ENCODE measurements at regions of chr1 and their contacts with region 1.

Region 1: DNA sequence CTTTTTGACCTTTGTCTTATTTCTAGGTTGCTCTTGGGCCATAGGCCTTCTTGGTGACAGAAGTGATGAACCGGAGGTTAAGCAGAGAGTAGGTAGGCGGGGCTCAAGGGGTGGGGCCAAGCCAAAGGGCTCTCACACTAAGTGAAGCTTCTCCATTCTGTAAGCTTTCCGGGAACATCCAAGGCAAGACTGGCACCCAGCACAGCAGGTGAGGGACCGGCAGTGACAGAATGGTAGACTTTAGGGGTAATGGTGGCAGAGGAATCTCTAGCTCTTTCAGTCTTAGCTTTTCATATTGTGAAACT is at the start of gene TNFAIP8L2:
- DNase-seq: peak; percentile 89
- ATAC-seq: peak; percentile 89
- H3K4me3 Mint-ChIP-seq: peak within 1 kb of the TSS; percentile 100
- H3K27ac Mint-ChIP-seq: peak within 1 kb of the TSS; percentile 98
- H3K4me1 Mint-ChIP-seq: peaks cover 55% of the 10 kb centered on the region
- H3K27me3 Mint-ChIP-seq: no peaks in the 10 kb centered on the region
- total RNA-seq, gene TNFAIP8L2: 18.5 to 20.0 TPM

Region 2: DNA sequence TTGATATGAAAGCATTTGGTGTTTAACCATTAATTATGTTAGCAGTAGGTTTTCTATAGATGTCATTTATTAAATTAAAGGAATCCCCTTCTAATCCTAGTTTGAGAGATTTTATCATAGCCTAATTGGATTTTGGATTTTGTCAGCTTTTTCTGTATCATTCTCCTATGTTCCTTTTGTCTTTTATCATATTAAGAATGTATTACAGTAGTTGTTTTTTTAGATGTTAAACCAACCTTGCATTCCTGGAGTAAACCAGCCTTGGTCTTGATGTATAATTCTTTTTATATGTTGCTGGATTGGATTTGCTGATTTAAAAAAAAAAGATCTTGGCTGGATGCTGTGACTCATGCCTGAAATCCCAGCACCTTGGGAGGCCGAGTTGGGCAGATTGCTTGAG is 224.7 kb before region 1 on chr1:
- CTCF ChIA-PET with region 1: no interaction called
- POLR2A ChIA-PET with region 1: no interaction called
- DNase-seq: no peak
- ATAC-seq: no peak
- H3K4me3 Mint-ChIP-seq: no peak overlapping the region
- H3K27ac Mint-ChIP-seq: no peak overlapping the region
- H3K4me1 Mint-ChIP-seq: peaks cover 14% of the 10 kb centered on the region
- H3K27me3 Mint-ChIP-seq: no peaks in the 10 kb centered on the region

Region 3: GRCh38 chr1:150944856-150945255 is 211.6 kb before region 1 on chr1:
- CTCF ChIA-PET with region 1: no interaction called
- POLR2A ChIA-PET with region 1: no interaction called
- DNase-seq: no peak
- ATAC-seq: no peak
- H3K4me3 Mint-ChIP-seq: no peak overlapping the region
- H3K27ac Mint-ChIP-seq: no peak overlapping the region
- H3K4me1 Mint-ChIP-seq: no peaks in the 10 kb centered on the region
- H3K27me3 Mint-ChIP-seq: no peaks in the 10 kb centered on the region

Region 4: GRCh38 chr1:151024540-151025146 is 131.8 kb before region 1 on chr1:
- CTCF ChIA-PET with region 1: interaction called, 52 read pairs
- POLR2A ChIA-PET with region 1: interaction called, 3 read pairs
- DNase-seq: peak; percentile 92
- ATAC-seq: peak; percentile 100
- H3K4me3 Mint-ChIP-seq: peak overlapping the region; percentile 45
- H3K27ac Mint-ChIP-seq: peak overlapping the region; percentile 74
- H3K4me1 Mint-ChIP-seq: peaks cover 7% of the 10 kb centered on the region
- H3K27me3 Mint-ChIP-seq: no peaks in the 10 kb centered on the region

Region 5: GRCh38 chr1:151059078-151059907 is 97.2 kb before region 1 on chr1 and contains the start of gene CDC42SE1:
- CTCF ChIA-PET with region 1: interaction called, 9 read pairs
- POLR2A ChIA-PET with region 1: interaction called, 11 read pairs
- DNase-seq: peak; percentile 91
- ATAC-seq: peak; percentile 78
- H3K4me3 Mint-ChIP-seq: peak within 1 kb of the TSS; percentile 94
- H3K27ac Mint-ChIP-seq: peak within 1 kb of the TSS; percentile 96
- H3K4me1 Mint-ChIP-seq: peaks cover 56% of the 10 kb centered on the region
- H3K27me3 Mint-ChIP-seq: no peaks in the 10 kb centered on the region
- total RNA-seq, gene CDC42SE1: 238 to 245 TPM

Region 6: DNA sequence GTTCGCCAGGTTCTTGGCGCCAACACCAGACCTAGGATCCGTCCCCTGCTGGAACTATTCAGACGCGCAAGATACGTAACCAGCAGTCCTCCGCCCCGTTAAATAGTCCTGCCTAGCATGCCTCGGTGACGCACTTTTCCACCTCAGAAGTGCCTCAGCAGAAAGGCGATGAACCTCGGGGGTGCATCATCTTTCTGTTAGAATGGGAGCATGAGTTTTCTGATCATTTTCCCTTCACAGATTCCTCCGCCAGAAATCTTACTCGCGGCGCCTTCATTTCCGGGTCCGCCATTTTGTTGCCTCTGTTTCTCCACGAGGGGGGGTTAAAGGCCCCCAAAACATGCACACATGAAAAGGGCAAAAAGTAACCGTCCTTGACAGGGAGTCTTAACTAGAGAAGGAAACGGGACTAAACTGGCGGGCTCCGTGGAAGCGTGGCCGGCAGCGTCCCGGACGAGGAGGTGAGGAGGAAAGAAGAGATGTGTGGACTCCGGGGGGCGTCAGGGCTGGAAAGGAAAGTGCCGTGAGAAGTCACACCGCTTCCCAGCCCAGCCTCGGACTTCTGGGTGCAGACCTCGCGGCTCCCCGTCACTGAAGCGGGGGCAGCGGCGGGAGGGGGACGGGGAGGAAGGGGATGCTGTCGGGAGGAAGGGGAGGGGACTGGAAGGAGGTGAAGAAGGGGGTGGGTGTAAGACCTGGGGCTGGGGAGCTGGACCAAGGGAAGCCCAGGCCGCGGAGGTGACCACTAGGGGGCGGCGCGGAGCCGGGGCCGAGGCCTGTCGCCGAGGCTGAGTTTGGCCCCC is 85.8 kb before region 1 on chr1 and contains the start of gene GABPB2:
- CTCF ChIA-PET with region 1: interaction called, 20 read pairs
- POLR2A ChIA-PET with region 1: interaction called, 6 read pairs
- DNase-seq: peak; percentile 88
- ATAC-seq: peak; percentile 87
- H3K4me3 Mint-ChIP-seq: peak within 1 kb of the TSS; percentile 98
- H3K27ac Mint-ChIP-seq: peak within 1 kb of the TSS; percentile 100
- H3K4me1 Mint-ChIP-seq: peaks cover 15% of the 10 kb centered on the region
- H3K27me3 Mint-ChIP-seq: no peaks in the 10 kb centered on the region
- total RNA-seq, gene GABPB2: 32.7 to 34.4 TPM

Region 7: DNA sequence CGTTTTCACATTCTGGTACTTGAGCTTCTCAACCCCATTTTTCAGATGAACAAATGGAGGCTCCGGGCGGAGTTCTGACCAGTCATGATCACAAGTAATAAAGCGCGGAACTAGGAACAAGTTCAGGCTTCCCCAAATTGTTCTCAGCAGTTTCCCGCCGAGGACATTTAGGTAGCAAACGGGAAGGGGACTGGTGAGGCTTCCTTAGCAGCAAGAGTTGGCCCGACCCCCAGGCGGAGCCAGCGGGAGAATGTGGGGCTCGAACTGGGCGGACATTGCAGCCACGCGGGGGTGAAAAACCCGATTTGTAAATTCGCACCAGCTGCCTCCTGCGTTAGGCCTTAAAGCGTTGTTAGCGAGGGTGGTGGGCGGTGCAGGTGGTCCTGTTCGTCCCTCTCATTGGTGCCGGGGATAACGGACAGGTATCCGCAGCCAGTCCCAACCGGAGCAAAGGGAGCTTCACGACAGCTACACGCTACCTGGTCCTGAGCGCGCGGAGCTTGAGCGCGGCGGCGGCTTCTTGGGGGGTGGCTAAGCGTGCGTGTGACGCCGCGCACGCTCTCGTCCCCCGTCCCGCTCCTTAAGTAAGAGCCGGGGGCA is 25.4 kb before region 1 on chr1:
- CTCF ChIA-PET with region 1: interaction called, 18 read pairs
- POLR2A ChIA-PET with region 1: interaction called, 12 read pairs
- DNase-seq: peak; percentile 88
- ATAC-seq: peak; percentile 100
- H3K4me3 Mint-ChIP-seq: peak overlapping the region; percentile 69
- H3K27ac Mint-ChIP-seq: peak overlapping the region; percentile 68
- H3K4me1 Mint-ChIP-seq: peaks cover 25% of the 10 kb centered on the region
- H3K27me3 Mint-ChIP-seq: peaks cover 3% of the 10 kb centered on the region

Region 8: GRCh38 chr1:151189638-151190445 is 33.4 kb after region 1 on chr1 and contains the start of gene VPS72:
- CTCF ChIA-PET with region 1: interaction called, 7 read pairs
- POLR2A ChIA-PET with region 1: interaction called, 11 read pairs
- DNase-seq: peak; percentile 92
- ATAC-seq: peak; percentile 96
- H3K4me3 Mint-ChIP-seq: peak within 1 kb of the TSS; percentile 100
- H3K27ac Mint-ChIP-seq: peak within 1 kb of the TSS; percentile 99
- H3K4me1 Mint-ChIP-seq: peaks cover 28% of the 10 kb centered on the region
- H3K27me3 Mint-ChIP-seq: peaks cover 3% of the 10 kb centered on the region
- total RNA-seq, gene VPS72: 59.8 to 61.7 TPM

Region 9: DNA sequence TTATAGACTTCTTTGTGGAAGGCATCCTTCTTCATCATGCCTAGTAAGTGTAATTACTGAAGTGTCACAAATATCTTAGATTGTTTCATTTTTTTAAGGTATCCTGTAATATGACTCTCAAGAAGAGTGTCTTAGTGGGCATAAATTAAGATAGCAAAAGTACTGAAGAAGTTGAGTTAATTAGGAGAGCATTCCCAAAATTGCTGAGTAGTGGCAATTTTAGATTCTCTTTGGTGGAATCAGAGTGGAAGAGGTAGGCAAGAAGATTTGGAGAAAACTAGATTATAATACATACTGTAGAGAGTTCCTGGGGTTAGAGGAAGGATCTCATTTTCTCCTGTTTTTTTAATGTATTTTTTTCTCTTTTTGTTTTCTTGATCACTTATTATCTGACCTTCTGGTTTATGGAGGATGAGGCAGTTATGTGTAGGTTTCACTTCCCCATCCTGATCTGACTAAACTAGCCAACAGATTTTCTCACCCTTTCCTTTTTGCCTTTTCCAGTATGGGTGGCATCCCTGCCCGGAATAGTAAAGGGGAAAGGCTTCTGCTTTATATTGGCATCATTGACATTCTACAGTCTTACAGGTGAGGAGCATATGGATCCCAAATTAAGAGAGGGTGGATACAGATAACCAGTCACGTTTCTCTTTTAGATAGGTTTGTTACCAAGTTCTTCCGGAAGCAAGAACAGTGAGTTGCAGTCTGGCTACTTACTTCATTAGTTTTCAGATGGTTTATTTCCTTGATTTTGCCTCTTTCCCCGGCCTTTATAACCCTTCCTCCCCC is 81.4 kb after region 1 on chr1:
- CTCF ChIA-PET with region 1: no interaction called
- POLR2A ChIA-PET with region 1: no interaction called
- DNase-seq: no peak
- ATAC-seq: no peak
- H3K4me3 Mint-ChIP-seq: no peak overlapping the region
- H3K27ac Mint-ChIP-seq: peak overlapping the region; percentile 13
- H3K4me1 Mint-ChIP-seq: no peaks in the 10 kb centered on the region
- H3K27me3 Mint-ChIP-seq: no peaks in the 10 kb centered on the region

Region 10: GRCh38 chr1:151254217-151255213 is 98.0 kb after region 1 on chr1 and contains the start of gene PSMD4:
- CTCF ChIA-PET with region 1: interaction called, 16 read pairs
- POLR2A ChIA-PET with region 1: interaction called, 7 read pairs
- DNase-seq: peak; percentile 96
- ATAC-seq: peak; percentile 97
- H3K4me3 Mint-ChIP-seq: peak within 1 kb of the TSS; percentile 86
- H3K27ac Mint-ChIP-seq: peak within 1 kb of the TSS; percentile 89
- H3K4me1 Mint-ChIP-seq: peaks cover 28% of the 10 kb centered on the region
- H3K27me3 Mint-ChIP-seq: no peaks in the 10 kb centered on the region
- total RNA-seq, gene PSMD4: 194 to 210 TPM

Region 11: GRCh38 chr1:151327223-151327902 is 170.9 kb after region 1 on chr1 and contains the start of gene PI4KB:
- CTCF ChIA-PET with region 1: no interaction called
- POLR2A ChIA-PET with region 1: no interaction called
- DNase-seq: peak; percentile 96
- ATAC-seq: peak; percentile 97
- H3K4me3 Mint-ChIP-seq: peak within 1 kb of the TSS; percentile 86
- H3K27ac Mint-ChIP-seq: peak within 1 kb of the TSS; percentile 97
- H3K4me1 Mint-ChIP-seq: peaks cover 34% of the 10 kb centered on the region
- H3K27me3 Mint-ChIP-seq: no peaks in the 10 kb centered on the region
- total RNA-seq, gene PI4KB: 56.0 to 70.2 TPM

Measured in activated CD8-positive, alpha-beta T cell treated with anti-CD3 and anti-CD28 coated beads, Interleukin-2, amount 10 ng/mL, durations not matched to agents 7 days and 5 days (primary cell).